ENCODE measurements at regions of chr5 and their contacts with region 1.

Region 1: DNA sequence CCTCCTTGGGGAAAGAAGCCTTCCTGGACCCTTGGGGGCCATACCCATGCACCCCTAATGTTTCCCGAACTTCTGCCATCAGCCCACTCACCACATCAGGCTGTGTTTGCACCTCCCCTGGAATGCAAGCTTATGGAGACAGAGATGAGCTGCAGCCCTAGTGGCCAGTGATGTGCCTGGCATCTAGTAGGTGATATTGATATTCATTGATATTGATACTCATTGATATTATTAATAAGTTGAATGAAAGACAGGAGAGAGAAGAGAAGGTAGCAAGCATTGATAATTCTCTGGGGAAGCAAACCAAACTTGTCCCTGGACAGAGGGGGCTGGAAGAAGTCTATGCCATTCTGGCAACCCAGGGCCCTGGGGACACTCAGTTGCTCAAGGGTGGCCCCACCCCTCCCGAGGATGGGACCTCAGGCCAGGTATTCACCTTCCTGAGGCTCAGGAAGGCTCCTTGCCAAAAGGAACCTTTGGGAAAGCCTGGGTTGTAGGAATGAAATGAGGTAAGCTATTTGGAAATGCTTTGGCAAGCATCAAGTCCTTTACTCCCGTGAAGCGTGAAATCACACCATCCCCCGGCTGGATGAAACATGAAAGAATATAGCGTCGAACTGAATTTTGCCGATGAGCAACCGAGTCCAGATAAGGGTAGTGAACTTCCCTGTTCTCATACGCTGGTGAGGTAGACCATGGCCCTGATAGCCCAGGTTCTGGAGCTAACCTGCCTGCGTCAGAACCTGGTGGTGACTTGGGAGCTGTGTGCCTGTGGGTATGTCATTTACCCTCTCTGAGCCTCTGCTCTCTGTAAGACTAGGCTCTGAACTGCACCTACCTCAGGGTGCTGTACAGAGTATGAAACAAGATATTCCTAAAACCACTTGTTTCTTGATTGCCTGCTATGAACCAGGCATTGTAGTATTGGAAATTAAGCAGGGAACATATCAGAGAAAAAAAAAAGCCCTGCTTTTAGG is 105.1 kb upstream of the BOD1 start:
- DNase-seq: no peak
- H3K4me3 ChIP-seq: no peak overlapping the region
- H3K27ac ChIP-seq: no peak overlapping the region
- H3K4me1 ChIP-seq: peaks cover 3 to 17% (median 6%) of the 10 kb centered on the region in 4 experiments; a peak in 6 of 7 replicates
- H3K27me3 ChIP-seq: no peaks in the 10 kb centered on the region
- CTCF ChIP-seq: peak in 2 of 3 experiments; percentile 31 to 50; a peak in 2 of 4 replicates
- EP300 ChIP-seq: no peak
- POLR2A ChIP-seq: no peak
- RAD21 ChIP-seq: peak in 1 of 2 experiments; percentile 3; a peak in 1 of 4 replicates

Region 2: DNA sequence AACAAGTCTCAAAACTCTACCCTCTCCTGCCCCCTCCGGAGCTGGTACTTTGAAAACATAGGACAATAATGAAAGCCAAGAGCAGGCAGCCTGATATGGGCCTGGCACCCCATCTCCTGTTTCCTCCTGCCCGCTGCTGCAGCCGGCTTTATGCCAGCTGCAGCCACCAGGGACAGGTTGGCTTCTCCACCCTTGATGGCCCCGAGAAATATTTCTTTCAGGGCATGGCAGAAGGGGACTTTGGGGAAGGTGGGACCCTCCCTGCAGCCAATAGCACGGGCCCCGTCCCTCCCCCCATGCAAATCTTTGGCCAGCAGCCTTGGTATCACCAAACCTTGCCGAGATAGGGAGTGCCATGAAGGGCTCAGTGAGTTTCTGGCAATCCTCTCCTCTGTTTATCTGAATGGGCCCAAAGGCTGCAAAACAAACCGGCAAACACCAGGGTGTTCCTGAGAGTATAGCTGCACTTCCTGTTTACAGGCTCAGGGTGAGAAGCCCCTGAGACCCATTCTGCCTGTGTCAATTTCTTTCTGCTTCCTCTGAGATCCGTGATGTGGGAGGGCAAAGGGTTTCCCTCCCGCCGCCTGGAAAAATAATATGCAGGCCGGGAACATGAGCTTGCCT is 31.7 kb before region 1 on chr5:
- CTCF ChIA-PET with region 1: no interaction called
- POLR2A ChIA-PET with region 1: no interaction called
- DNase-seq: no peak
- H3K4me3 ChIP-seq: no peak overlapping the region
- H3K27ac ChIP-seq: no peak overlapping the region
- H3K4me1 ChIP-seq: peaks cover 0 to 2% (median under 1%) of the 10 kb centered on the region in 4 experiments; a peak in 3 of 7 replicates
- H3K27me3 ChIP-seq: no peaks in the 10 kb centered on the region
- CTCF ChIP-seq: no peak
- EP300 ChIP-seq: no peak
- POLR2A ChIP-seq: no peak
- RAD21 ChIP-seq: 0 out of 4 replicates have a peak, but pooled peaks of 1 of the 2 experiments have one; percentile 4

Region 3: GRCh38 chr5:173733021-173733420 is 11.5 kb after region 1 on chr5:
- CTCF ChIA-PET with region 1: interaction called, 10 read pairs
- POLR2A ChIA-PET with region 1: interaction called, 9 read pairs
- DNase-seq: no peak
- H3K4me3 ChIP-seq: no peak overlapping the region
- H3K27ac ChIP-seq: no peak overlapping the region
- H3K4me1 ChIP-seq: peaks cover 0 to 6% (median 4%) of the 10 kb centered on the region in 4 experiments; a peak in 4 of 7 replicates
- H3K27me3 ChIP-seq: no peaks in the 10 kb centered on the region; a peak in 1 of 7 replicates
- CTCF ChIP-seq: no peak
- EP300 ChIP-seq: no peak
- POLR2A ChIP-seq: no peak
- RAD21 ChIP-seq: no peak

Region 4: DNA sequence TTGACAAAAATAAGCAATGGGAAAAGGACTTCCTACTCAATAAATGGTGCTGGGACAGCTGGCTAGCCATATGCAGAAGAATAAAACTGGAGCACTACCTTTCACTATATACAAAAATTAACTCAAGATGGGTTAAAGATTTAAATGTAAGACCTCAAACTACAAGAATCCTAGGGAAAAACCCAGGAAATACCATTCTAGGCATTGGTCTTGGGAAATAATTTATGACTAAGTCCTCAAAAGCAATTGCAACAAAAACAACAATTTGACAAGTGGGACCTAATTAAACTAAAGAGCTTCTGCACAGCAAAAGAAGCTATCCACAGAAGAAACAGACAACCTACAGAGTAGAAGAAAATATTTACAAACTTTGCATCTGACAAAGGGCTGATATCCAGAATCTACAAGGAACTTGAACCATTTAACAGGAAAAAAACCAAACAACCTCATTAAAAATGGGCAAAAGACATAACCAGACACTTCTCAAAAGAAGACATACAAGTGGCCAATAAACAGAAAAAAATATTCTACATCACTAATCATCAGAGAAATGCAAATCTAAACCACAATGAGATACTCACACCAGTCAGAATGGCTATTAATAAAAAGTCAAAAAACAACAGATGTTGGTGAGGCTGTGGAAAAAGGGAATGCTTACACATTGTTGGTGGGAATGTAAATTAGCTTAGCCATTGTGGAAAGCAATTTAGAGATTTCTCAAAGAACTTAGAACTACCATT is 91.4 kb after region 1 on chr5:
- CTCF ChIA-PET with region 1: no interaction called
- POLR2A ChIA-PET with region 1: no interaction called
- DNase-seq: no peak
- H3K4me3 ChIP-seq: no peak overlapping the region
- H3K27ac ChIP-seq: no peak overlapping the region
- H3K4me1 ChIP-seq: no peaks in the 10 kb centered on the region
- H3K27me3 ChIP-seq: no peaks in the 10 kb centered on the region
- CTCF ChIP-seq: no peak
- EP300 ChIP-seq: no peak
- POLR2A ChIP-seq: no peak
- RAD21 ChIP-seq: no peak

Region 5: DNA sequence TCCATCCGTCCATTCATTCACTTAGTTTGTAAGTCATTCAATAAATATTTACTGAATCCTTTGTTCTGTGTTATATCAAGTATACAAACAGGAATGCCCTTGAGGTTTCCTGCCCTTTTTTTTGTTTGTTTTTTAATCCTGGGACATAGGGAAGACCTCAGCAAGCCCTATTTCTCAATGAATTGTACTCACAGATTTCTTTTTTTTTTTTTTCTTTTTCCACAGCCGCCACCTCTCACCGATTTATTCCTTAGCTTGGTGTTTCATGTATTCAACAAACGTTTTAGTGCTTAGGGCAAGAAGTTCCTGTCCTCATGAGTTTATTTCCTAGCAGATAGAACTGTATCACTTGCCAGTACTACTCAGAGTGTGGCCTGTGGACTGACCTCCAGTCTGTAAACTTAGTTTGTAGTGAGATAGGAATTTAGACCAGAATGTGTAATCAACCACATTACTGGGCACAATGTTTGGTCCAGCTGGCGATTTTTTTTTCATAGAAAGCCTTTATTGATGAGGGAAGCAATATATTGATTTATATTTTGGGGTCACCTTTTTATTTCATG is 232.1 kb after region 1 on chr5:
- CTCF ChIA-PET with region 1: no interaction called
- POLR2A ChIA-PET with region 1: no interaction called
- DNase-seq: no peak
- H3K4me3 ChIP-seq: no peak overlapping the region
- H3K27ac ChIP-seq: no peak overlapping the region
- H3K4me1 ChIP-seq: no peaks in the 10 kb centered on the region
- H3K27me3 ChIP-seq: no peaks in the 10 kb centered on the region
- CTCF ChIP-seq: no peak
- EP300 ChIP-seq: no peak
- POLR2A ChIP-seq: no peak
- RAD21 ChIP-seq: no peak